Heart right ventricle (tissue), 16 donors: ENCODE measurements at regions of chr12 and their contacts with region 1.

Region 1: DNA sequence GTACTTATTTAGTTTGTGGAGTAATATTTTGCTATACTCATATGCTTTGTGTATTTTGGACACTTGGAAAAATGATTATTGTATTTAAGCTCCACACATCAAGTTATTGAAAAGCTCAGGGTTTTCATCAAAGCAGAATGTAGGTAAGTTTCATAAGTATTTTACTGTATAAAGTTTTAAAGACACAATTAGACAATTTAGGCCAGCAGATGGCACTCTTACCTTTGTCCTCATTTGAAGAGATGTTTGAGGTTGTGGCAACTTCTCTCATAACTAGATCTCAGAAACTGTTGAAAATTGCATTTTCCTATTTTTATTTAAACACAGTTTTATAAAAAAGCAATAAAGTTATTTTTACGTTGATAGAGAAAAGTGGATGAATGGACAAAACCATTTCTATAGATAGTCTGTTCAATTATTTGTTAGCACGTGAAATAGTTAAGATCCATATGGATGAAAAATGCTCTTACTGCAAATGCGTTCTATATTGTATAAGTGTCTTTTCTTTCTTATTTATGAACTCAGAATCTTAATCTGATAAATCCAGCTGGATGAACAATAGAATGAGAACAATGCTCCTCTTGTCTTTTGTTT is 300.0 kb downstream of the AEBP2 start:
- DNase-seq: peak in 1 of 2 donors; percentile 61
- ATAC-seq: peak in 4 of 8 donors; percentile 52 to 73 (median 62)
- H3K4me3 ChIP-seq: no peak overlapping the region
- H3K27ac ChIP-seq: no peak overlapping the region
- H3K4me1 ChIP-seq: peaks cover 0 to 36% (median 15%) of the 10 kb centered on the region in 9 donors
- H3K27me3 ChIP-seq: no peaks in the 10 kb centered on the region
- CTCF ChIP-seq: peak; percentile 45 to 80 (median 72)

Region 2: DNA sequence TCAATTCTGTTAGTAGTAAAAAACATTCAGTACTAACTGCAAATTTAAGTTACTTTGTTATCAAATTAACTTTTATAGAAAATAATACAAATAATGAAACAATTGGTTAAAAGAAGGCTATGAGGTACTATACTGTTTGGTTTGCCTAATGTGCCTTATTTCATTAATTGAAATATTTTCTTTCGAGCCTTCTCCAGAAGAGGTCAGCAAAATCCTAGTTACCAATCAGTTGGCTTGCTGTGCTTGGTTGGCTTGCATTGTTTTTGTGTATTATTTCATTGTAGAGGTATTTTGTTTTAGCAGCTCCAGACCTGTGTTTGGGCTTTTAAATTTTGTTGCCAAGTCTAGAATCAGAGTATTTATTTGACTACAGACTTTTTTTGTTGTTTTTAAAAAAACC is 231.5 kb before region 1 on chr12:
- intact Hi-C with region 1: loop called in 1 of 10 experiments (anchors 5 kb)
- DNase-seq: no peak
- ATAC-seq: peak in 4 of 8 donors; percentile 43 to 71 (median 52)
- H3K4me3 ChIP-seq: no peak overlapping the region
- H3K27ac ChIP-seq: no peak overlapping the region
- H3K4me1 ChIP-seq: peaks cover 0 to 31% (median 9%) of the 10 kb centered on the region in 9 donors
- H3K27me3 ChIP-seq: no peaks in the 10 kb centered on the region
- CTCF ChIP-seq: peak in 8 of 9 donors; percentile 14 to 63 (median 50)